Colonic mucosa (tissue), 4 donors: ENCODE measurements at regions of chr5 and their contacts with region 1.

Region 1: DNA sequence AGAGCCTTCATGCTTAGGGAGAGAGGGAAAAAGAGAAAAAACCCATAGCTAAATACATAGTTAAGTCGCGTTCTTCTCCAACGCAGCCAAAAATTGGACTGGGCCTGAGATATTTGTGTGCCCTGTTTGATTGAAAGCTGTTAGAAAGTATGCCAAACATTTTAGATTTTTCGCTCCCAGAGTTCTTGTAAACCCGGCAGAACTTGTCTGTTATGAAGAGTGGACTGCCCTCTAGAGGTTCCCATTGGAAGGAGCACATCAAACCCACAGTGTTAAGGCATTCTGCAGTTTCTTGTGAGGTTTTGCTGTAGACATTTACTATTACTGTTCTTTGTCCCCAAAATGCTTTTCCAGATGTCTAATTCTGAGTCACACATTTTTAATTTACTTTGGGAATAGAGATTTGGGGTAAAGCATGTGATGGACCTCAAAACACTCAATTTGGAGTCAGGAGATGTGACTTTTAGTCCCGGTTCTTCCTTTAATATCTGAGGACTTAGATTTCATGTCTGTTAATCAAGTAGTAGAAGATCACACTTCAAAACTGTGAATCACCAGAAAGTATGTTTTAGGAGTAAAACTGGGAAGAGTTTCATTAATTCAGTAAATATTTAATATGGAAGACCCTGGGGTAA is 96.6 kb downstream of the PCSK1 start:
- DNase-seq: peak; percentile 88
- H3K4me3 ChIP-seq: no peak overlapping the region
- H3K27ac ChIP-seq: no peak overlapping the region
- H3K4me1 ChIP-seq: no peaks in the 10 kb centered on the region
- H3K27me3 ChIP-seq: no peaks in the 10 kb centered on the region
- CTCF ChIP-seq: peak; percentile 92

Region 2: DNA sequence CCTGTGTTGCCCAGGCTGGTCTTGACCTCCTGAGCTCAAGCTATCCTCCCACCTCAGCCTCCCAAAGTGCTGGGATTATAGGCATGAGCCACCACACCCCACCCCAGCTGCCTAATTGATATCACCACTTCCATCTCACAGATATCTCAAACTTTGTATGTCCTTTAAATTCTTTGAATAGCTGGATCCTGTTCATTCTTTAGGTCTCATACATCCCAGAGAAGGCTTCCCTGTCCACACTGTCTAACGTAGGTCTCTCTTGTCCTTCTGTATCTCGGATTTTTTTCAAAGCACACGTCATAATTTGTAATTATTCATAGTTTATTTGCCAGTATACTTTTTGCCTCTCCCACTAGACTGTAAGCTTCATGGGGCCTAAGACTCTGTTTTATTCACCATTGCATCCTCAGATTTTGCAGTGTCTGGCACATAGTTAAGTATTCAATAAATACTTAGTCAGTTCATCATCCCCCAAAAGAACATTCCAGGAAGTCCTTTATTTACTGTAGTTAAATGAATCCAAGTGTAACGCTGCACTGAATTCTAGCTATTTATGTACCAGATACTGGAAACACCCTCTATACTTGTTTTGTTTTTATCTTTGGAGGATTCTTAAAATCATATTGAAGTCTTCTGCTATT is 771.1 kb before region 1 on chr5:
- intact Hi-C with region 1: no loop called
- DNase-seq: no peak
- H3K4me3 ChIP-seq: no peak overlapping the region
- H3K27ac ChIP-seq: no peak overlapping the region
- H3K4me1 ChIP-seq: no peaks in the 10 kb centered on the region
- H3K27me3 ChIP-seq: no peaks in the 10 kb centered on the region
- CTCF ChIP-seq: no peak

Region 3: DNA sequence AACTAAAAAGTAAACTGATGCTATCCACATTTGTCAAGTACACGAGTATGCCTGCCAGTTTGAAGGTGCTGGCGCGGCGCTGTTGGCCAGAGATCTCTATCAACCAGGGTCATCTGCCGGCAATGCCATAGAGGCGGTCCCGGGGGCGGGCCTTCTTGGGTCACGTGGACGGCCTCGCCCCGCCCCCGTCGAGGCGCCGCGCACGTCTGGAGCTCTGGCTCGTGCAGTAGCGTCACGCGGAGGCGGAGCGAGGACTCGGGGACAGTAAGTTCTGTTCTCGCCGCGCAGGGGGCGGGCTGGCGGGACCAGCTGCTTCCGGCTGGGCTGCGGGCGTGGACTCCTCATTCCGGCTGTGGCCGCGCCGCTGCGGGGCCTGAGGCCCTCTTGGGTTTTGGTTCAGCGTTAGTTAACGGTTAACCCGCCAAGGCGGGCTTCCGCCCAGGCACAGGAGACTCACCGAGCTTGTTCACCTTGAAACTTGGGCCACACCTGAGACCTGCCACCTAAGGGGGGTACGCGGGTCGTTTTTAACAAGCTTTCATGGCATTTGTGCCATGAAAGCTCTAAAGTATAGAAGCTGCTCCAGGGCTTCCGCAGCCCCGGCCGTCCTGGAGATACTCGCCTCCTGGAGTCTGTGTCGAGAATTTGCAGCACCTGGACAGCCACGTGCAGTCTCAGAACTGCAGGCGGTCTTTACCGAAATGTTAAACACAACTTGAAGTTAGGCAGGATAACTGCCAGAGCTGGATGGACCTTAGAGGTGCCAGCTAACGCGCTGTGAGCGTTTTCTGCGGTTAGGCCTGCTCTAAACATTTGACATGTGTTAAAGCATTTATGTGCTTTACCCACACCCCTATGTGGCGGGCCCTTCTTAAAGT is 689.7 kb before region 1 on chr5 and contains the start of gene RFESD:
- intact Hi-C with region 1: loop called (anchors 10 kb)
- DNase-seq: peak; percentile 99
- H3K4me3 ChIP-seq: peak within 1 kb of the TSS; percentile 51
- H3K27ac ChIP-seq: peak within 1 kb of the TSS; percentile 91
- H3K4me1 ChIP-seq: no peaks in the 10 kb centered on the region
- H3K27me3 ChIP-seq: no peaks in the 10 kb centered on the region
- CTCF ChIP-seq: peak; percentile 19
- total RNA-seq, gene RFESD: 0.89 to 2.0 TPM

Region 4: DNA sequence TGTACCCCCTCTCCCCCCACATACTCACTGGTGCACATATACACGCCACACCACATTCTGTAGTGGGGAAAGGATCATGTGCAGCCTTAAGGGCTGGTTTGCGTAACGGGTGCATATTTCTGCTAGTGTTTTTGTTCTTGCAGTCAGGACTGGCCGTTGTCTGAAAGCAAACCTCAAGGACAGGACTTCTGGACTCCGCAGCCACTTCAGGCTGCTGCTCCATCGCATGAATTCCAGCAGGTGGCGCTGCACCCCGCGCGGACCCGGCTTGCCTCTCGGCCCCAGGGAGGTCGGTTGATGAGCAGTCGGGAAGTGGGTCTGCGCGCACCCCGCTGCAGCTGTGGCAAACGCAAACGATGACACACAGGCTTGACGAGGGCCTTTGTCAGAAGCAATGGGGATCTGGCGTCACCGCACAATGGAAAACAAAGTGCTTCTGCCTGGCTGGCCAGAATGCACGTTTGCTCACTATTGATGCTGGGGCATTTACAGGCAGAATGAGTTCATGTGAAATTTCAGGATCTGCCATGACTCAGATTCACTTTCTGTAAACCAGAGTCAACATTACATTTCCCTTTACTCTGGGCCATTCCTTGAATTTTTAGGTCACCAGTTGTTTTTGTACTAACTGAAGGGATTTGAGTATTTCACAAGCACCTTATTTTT is 477.7 kb before region 1 on chr5:
- intact Hi-C with region 1: loop called (anchors 2 kb)
- DNase-seq: peak; percentile 88
- H3K4me3 ChIP-seq: no peak overlapping the region
- H3K27ac ChIP-seq: peak overlapping the region; percentile 37
- H3K4me1 ChIP-seq: peaks cover 7% of the 10 kb centered on the region
- H3K27me3 ChIP-seq: no peaks in the 10 kb centered on the region
- CTCF ChIP-seq: peak; percentile 98

Region 5: GRCh38 chr5:95961617-95962474 is 374.6 kb before region 1 on chr5 and contains the start of gene ELL2:
- intact Hi-C with region 1: loop called (anchors 2 kb)
- DNase-seq: peak; percentile 99
- H3K4me3 ChIP-seq: peak within 1 kb of the TSS; percentile 88
- H3K27ac ChIP-seq: peak within 1 kb of the TSS; percentile 96
- H3K4me1 ChIP-seq: peaks cover 13% of the 10 kb centered on the region
- H3K27me3 ChIP-seq: no peaks in the 10 kb centered on the region
- CTCF ChIP-seq: no peak
- total RNA-seq, gene ELL2: 26.9 to 38.2 TPM